ENCODE measurements at regions of chr12 and their contacts with region 1.

Region 1: DNA sequence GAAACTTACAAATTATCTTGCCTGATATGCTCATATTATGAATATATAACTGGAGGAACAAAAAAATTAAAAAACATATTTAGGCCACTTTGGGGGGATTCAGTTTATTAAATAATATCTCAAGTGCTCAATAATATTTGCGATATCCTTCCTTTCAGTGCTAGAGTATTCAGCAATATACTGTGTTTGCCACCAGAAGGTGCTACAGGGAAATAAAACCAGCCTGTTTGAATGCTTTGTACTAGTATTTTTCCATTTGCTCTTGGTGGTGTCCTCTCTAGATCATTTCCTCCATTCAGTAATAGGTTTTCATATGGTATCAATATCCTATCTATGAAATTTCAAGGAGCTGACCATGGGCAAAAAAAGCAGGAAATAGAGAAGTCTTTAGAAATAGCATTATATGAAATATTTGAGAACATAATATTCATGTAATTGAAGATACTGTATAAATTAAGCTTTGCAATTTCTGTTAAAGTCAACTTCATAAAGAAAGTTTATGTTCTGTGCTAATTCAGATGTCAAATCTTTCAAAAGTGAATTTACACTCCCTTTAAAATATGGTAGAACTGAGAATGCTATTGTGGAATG is 106.2 kb upstream of the NAV3 start:
- DNase-seq: no peak
- ATAC-seq: peak; percentile 78 to 92 (median 82)
- H3K4me3 ChIP-seq: no peak overlapping the region
- H3K27ac ChIP-seq: no peak overlapping the region
- H3K4me1 ChIP-seq: no peaks in the 10 kb centered on the region
- H3K27me3 ChIP-seq: peaks cover 0 to 4% of the 10 kb centered on the region in 2 donors
- CTCF ChIP-seq: peak; percentile 61 to 89 (median 64)
- POLR2A ChIP-seq: no peak

Region 2: GRCh38 chr12:77914081-77914488 is 189.6 kb after region 1 on chr12:
- intact Hi-C with region 1: loop called in 1 of 2 experiments (anchors 5 kb)
- DNase-seq: no peak
- ATAC-seq: peak; percentile 43 to 61 (median 54)
- H3K4me3 ChIP-seq: no peak overlapping the region
- H3K27ac ChIP-seq: no peak overlapping the region
- H3K4me1 ChIP-seq: no peaks in the 10 kb centered on the region
- H3K27me3 ChIP-seq: no peaks in the 10 kb centered on the region
- CTCF ChIP-seq: peak in 3 of 4 donors; percentile 30 to 34 (median 30)
- POLR2A ChIP-seq: no peak

Region 3: DNA sequence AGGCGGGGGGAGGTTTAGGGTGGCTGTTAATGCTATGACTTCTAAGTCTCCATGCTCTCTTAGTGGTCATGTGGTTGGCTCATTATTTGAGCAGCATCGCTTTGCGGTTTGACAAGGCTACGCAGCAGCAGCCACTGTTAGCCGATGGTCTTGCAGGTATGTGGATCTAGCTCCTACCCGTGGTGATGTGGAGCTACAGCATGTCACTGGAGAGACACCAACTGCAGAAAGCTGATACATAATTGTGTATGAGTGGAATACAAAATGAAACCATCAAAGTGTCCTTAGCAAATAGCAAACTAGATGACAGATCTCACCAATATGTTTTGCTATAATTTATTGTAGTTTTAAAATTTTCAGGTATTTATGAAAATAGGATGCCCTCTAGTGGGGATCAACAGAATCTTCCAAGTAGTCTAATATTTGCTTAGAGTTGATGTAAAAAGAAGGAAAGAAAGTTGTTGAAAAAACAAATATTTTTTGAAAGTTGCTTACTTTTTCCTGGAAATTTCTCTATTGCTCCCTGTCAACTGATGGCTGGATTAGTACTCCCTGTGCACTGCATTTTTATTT is 201.2 kb after region 1 on chr12:
- intact Hi-C with region 1: loop called (anchors 5 to 10 kb)
- DNase-seq: peak; percentile 46 to 74 (median 56)
- ATAC-seq: peak; percentile 98 to 100 (median 100)
- H3K4me3 ChIP-seq: no peak overlapping the region
- H3K27ac ChIP-seq: no peak overlapping the region
- H3K4me1 ChIP-seq: no peaks in the 10 kb centered on the region
- H3K27me3 ChIP-seq: no peaks in the 10 kb centered on the region
- CTCF ChIP-seq: peak; percentile 88 to 98 (median 97)
- POLR2A ChIP-seq: no peak